Activated CD8-positive, alpha-beta T cell treated with anti-CD3 and anti-CD28 coated beads, Interleukin-2, amount 10 ng/mL, durations not matched to agents 7 days and 5 days (primary cell): ENCODE measurements at regions of chr1 and their contacts with region 1.

Region 1: GRCh38 chr1:156140879-156141252 is 12.5 kb upstream of the SEMA4A start:
- DNase-seq: no peak
- ATAC-seq: no peak
- H3K4me3 Mint-ChIP-seq: no peak overlapping the region
- H3K27ac Mint-ChIP-seq: no peak overlapping the region
- H3K4me1 Mint-ChIP-seq: peaks cover 5% of the 10 kb centered on the region
- H3K27me3 Mint-ChIP-seq: no peaks in the 10 kb centered on the region

Region 2: DNA sequence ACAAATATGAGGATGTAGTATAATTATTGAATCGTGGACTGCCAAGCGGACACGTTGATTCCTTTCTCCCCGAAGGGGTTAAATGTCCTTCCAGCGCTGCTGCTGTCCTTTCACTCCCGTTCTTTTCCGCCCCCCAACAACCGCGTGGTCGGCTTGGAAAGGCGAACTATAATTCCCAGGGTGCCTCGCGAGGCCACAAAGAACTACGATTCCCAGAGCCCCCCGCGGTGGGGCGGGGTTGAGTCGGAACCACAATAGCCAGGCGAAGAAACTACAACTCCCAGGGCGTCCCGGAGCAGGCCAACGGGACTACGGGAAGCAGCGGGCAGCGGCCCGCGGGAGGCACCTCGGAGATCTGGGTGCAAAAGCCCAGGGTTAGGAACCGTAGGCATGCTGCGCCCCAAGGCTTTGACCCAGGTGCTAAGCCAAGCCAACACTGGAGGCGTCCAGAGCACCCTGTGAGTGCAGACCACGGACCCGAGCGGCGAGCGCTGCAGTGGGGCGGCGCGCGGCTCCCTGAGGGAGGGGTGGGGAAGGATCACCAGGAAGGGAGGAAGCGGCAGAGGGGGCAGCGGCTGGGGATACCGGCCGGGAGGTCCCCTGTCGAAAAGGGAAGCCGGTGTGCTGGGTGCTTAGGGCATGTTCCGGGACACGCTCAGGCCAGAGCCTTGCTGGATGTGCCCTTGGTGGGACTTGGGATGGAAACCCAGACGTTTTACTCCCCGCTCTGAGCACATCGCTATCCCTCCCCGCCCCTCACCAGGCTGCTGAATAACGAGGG is 86.2 kb before region 1 on chr1 and contains the start of gene LAMTOR2:
- CTCF ChIA-PET with region 1: no interaction called
- POLR2A ChIA-PET with region 1: no interaction called
- DNase-seq: peak; percentile 98
- ATAC-seq: peak; percentile 79
- H3K4me3 Mint-ChIP-seq: peak within 1 kb of the TSS; percentile 96
- H3K27ac Mint-ChIP-seq: peak within 1 kb of the TSS; percentile 91
- H3K4me1 Mint-ChIP-seq: peaks cover 23% of the 10 kb centered on the region
- H3K27me3 Mint-ChIP-seq: no peaks in the 10 kb centered on the region
- total RNA-seq, gene LAMTOR2: 72.4 to 74.1 TPM

Region 3: DNA sequence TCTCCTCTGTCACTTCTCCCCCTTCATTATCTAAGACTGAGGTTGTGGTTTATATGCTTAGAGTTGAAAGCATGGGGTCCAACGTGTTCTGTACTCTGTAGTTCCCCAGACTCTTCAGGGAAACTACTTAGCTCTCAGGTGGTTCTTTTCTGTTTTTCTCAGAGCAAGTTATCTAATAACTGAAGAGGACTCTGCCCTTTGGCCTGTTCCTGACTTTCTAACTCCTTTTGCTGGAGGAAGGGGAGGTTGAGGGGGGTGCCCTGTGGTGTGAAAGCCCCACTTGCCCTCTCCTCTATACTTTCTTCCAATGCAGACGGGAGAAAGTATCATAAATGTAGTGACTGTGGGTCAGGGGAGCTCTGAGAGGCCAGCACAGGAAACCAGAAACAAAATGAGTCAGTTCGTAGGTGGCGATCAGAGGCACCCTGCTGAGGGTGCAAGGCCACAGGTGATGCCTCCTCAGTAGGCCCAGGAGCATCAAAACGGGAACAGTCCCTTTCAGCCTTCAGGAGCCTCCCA is 58.0 kb after region 1 on chr1:
- CTCF ChIA-PET with region 1: interaction called, 29 read pairs
- POLR2A ChIA-PET with region 1: interaction called, 24 read pairs
- DNase-seq: no peak
- ATAC-seq: peak; percentile 44
- H3K4me3 Mint-ChIP-seq: peak overlapping the region; percentile 62
- H3K27ac Mint-ChIP-seq: peak overlapping the region; percentile 90
- H3K4me1 Mint-ChIP-seq: peaks cover 64% of the 10 kb centered on the region
- H3K27me3 Mint-ChIP-seq: no peaks in the 10 kb centered on the region